Endothelial cell of umbilical vein (primary cell): ENCODE measurements at regions of chr1 and their contacts with region 1.

Region 1: GRCh38 chr1:151934048-151934493 is 24.8 kb upstream of the THEM4 start:
- DNase-seq: peak; percentile 71
- H3K4me3 ChIP-seq: no peak overlapping the region
- H3K27ac ChIP-seq: no peak overlapping the region
- H3K4me1 ChIP-seq: peaks cover 6% of the 10 kb centered on the region
- H3K27me3 ChIP-seq: no peaks in the 10 kb centered on the region
- CTCF ChIP-seq: peak; percentile 70 to 77
- POLR2A ChIP-seq: no peak

Region 2: GRCh38 chr1:151853411-151853943 is 80.6 kb before region 1 on chr1 and contains the start of gene THEM5:
- CTCF ChIA-PET with region 1: no interaction called
- POLR2A ChIA-PET with region 1: no interaction called
- dilution Hi-C with region 1: no loop called
- intact Hi-C with region 1: no loop called
- DNase-seq: no peak
- H3K4me3 ChIP-seq: no peak within 1 kb of the TSS
- H3K27ac ChIP-seq: no peak within 1 kb of the TSS
- H3K4me1 ChIP-seq: peaks cover 10% of the 10 kb centered on the region
- H3K27me3 ChIP-seq: peaks cover 3 to 6% of the 10 kb centered on the region in 2 experiments
- CTCF ChIP-seq: no peak
- POLR2A ChIP-seq: no peak
- total RNA-seq, gene THEM5: not detected in 2 replicates

Region 3: GRCh38 chr1:151888972-151889570 is 45.0 kb before region 1 on chr1:
- CTCF ChIA-PET with region 1: interaction called, 10 read pairs
- POLR2A ChIA-PET with region 1: no interaction called
- dilution Hi-C with region 1: no loop called
- intact Hi-C with region 1: loop called (anchors 1 kb)
- DNase-seq: peak; percentile 28
- H3K4me3 ChIP-seq: no peak overlapping the region
- H3K27ac ChIP-seq: no peak overlapping the region
- H3K4me1 ChIP-seq: peaks cover 15% of the 10 kb centered on the region
- H3K27me3 ChIP-seq: no peaks in the 10 kb centered on the region
- CTCF ChIP-seq: peak; percentile 20 to 22
- POLR2A ChIP-seq: no peak

Region 4: DNA sequence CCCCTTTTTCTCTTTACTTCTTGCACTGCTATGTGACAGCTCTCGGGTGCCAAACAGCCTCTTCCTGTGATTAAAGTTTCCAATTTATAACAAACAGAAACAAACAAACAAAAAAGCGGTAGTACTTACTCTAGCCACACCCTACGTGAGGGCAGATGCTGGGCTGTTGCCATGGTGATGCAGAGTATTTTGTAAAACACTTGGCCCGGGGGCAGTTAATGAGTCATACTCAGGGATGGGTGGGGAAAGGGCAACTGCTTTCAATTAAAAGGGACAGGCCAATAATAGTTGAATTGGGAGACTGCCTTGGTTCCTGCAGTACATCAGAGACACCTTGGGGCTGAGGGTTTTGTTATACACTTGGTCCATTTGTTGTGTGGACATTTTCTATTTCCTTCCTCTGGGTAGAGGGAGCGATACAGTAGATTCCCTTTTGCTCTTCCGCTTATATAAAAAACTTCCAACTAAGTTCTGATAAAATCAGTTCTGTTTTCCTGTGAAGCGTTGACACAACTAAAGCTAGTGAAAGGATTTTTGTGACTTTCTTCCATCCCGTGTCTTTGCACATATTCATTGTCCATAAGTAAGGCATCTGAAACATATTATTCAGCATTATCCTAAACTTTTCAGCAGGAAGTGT is 11.8 kb after region 1 on chr1:
- CTCF ChIA-PET with region 1: interaction called, 10 read pairs
- POLR2A ChIA-PET with region 1: no interaction called
- dilution Hi-C with region 1: no loop called
- intact Hi-C with region 1: no loop called
- DNase-seq: peak; percentile 90
- H3K4me3 ChIP-seq: no peak overlapping the region
- H3K27ac ChIP-seq: peak overlapping the region; percentile 58
- H3K4me1 ChIP-seq: peaks cover 19% of the 10 kb centered on the region
- H3K27me3 ChIP-seq: no peaks in the 10 kb centered on the region
- CTCF ChIP-seq: no peak
- POLR2A ChIP-seq: no peak

Region 5: DNA sequence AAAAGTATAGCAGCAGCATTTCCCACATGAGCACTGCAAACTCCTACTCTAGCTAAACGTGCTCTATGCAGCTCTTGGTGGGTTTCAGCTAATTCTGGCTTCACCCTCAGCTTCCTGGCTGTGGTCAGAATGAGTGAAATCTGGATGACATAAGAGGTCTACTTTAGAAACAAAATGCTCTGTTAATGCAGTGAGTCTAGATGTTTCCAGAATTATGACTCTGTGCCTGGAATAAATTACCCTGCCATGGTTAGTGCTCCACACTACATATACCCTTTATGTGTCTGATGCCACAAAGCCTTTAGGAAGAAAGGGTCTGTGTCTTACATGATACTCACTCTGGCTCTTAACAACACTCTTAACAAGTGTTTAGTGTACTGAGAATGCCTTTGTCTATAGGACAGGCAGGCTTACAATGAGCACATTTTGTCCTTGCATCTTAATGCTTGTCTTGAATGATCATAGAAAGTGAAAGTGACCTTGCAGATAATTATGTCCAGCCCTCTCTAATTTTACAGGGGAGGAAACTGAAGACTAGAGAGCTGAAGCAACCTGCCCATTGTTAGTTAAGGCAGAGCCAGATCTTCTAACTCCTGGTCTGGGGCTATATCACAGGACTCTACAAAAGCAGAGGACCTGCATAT is 50.4 kb after region 1 on chr1:
- CTCF ChIA-PET with region 1: interaction called, 572 read pairs
- POLR2A ChIA-PET with region 1: interaction called, 3 read pairs
- dilution Hi-C with region 1: no loop called
- intact Hi-C with region 1: no loop called
- DNase-seq: no peak
- H3K4me3 ChIP-seq: no peak overlapping the region
- H3K27ac ChIP-seq: no peak overlapping the region
- H3K4me1 ChIP-seq: peaks cover 43% of the 10 kb centered on the region
- H3K27me3 ChIP-seq: no peaks in the 10 kb centered on the region
- CTCF ChIP-seq: no peak
- POLR2A ChIP-seq: no peak

Region 6: GRCh38 chr1:152001391-152002249 is 67.5 kb after region 1 on chr1:
- CTCF ChIA-PET with region 1: interaction called, 572 read pairs
- POLR2A ChIA-PET with region 1: no interaction called
- dilution Hi-C with region 1: no loop called
- intact Hi-C with region 1: loop called (anchors 1 kb)
- DNase-seq: peak; percentile 87
- H3K4me3 ChIP-seq: no peak overlapping the region
- H3K27ac ChIP-seq: no peak overlapping the region
- H3K4me1 ChIP-seq: no peaks in the 10 kb centered on the region
- H3K27me3 ChIP-seq: peaks cover 24 to 32% of the 10 kb centered on the region in 2 experiments
- CTCF ChIP-seq: peak; percentile 89 to 91
- POLR2A ChIP-seq: no peak

Region 7: DNA sequence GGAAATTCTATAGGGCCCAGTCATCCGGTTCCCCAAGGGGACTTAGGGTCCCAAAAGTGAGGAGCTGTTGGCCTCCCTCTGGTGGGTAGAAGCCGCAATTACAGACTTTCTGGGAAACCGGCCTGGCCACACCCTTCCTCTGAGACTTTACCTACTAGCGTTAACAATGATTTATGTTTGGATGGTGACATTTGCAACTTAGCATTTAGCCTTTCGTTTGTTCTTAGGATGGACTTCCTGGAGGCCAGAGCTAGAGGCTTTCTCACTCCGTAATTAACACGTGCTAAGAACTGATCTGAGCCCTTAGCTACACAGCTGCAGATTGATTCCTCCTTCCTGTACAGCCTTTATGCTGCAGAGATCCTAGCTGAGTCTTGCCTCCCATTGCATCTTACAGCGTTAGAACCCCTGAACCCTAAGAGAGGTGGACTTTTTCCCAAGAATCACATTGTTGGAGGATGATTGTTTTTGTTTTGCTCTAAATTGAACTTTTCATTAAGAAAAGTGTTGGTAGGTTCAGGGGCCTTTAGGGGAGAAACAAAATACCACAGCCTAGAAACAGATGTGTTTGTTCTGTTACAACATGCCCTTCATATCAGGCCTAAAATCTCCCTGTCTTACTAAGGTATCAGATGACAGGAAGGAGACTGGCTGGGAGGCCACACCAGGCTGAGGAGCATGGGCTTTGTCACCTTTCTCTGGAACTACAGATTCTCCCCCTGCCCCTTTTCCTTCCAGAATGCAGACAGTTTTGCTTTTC is 100.8 kb after region 1 on chr1:
- CTCF ChIA-PET with region 1: interaction called, 10 read pairs
- POLR2A ChIA-PET with region 1: no interaction called
- dilution Hi-C with region 1: no loop called
- intact Hi-C with region 1: loop called (anchors 1 kb)
- DNase-seq: peak; percentile 60
- H3K4me3 ChIP-seq: peak overlapping the region; percentile 55 to 99 (median 98)
- H3K27ac ChIP-seq: peak overlapping the region; percentile 81
- H3K4me1 ChIP-seq: peaks cover 21% of the 10 kb centered on the region
- H3K27me3 ChIP-seq: peaks cover 6 to 9% of the 10 kb centered on the region in 2 experiments
- CTCF ChIP-seq: peak; percentile 66 to 74
- POLR2A ChIP-seq: peak; percentile 25

Region 8: DNA sequence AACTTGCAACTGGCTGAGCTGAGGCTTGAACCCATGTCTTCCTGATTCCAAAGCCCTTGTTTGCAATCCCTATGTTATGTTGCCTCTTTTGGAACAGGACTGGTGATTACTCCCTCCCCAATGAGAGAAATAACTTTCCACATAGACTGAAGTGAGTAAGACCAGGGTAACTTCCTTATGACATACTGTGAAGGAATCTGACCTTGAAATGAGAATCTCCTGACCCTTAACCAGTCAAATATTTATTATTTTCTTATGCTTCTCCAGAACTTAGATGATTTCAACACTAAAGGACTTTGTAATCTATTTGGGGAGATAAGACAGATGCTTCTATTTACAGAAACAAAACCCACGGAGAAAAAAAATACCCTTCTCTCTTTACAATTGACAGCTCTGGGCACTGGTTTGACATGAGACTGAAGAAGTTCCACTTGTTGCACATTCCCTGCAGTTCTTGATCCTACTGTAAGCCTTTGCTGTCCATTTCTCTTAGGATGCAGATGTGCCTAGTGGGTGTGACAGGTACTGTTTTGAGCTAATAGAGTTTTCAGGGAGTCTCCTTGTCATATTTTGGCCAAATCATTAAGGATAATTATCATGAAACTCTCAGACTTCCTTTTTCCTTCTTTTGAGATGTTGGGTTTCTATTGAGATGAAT is 228.9 kb after region 1 on chr1:
- CTCF ChIA-PET with region 1: no interaction called
- POLR2A ChIA-PET with region 1: no interaction called
- dilution Hi-C with region 1: no loop called
- intact Hi-C with region 1: no loop called
- DNase-seq: no peak
- H3K4me3 ChIP-seq: no peak overlapping the region
- H3K27ac ChIP-seq: no peak overlapping the region
- H3K4me1 ChIP-seq: no peaks in the 10 kb centered on the region
- H3K27me3 ChIP-seq: peaks cover 0 to 4% of the 10 kb centered on the region in 2 experiments
- CTCF ChIP-seq: no peak
- POLR2A ChIP-seq: no peak